BJ (cell line): ENCODE measurements at regions of chr5 and their contacts with region 1.

Region 1: DNA sequence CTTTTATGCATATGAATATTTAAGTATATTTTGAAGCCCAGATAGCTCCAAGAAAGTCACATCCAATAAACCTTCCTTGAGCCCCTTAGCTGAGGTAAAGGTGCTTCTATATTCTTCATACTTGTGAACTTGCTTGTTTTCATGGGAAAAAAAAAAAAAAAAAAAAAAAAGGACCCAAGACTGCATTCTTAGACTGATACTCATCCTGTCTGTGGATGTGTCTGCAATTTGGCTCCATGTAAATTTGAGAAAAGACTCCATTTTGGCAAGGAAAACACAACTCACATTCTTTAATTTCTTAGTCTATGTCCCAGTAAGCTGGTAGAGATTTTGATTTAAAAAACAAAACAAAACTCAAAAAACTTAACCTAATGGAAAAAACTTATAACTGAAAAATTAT is 238.3 kb downstream of the FBXL17 start:
- DNase-seq: peak; percentile 40
- H3K4me3 ChIP-seq: no peak overlapping the region
- H3K27me3 ChIP-seq: no peaks in the 10 kb centered on the region
- CTCF ChIP-seq: no peak

Region 2: DNA sequence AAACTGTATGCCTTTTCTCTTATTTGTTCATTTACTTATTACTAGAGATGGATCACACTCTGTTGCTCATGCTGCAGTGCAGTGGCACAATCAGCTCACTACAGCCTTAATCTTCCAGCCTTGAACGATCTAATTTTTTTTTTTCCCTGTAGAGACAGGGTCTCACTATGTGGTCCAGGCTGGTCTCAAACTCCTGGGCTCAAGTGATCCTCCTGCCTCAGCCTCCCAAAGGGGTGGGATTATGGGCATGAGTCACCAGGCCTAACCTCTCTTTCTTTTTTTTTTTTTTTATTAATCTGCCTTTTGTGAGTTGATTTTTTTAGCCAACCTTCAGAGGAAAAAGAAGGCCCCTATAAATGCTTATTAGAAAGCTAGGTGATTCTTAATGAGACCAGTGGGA is 64.7 kb before region 1 on chr5:
- CTCF ChIA-PET with region 1: no interaction called
- POLR2A ChIA-PET with region 1: interaction called, 16 read pairs
- DNase-seq: no peak
- H3K4me3 ChIP-seq: no peak overlapping the region
- H3K27me3 ChIP-seq: no peaks in the 10 kb centered on the region
- CTCF ChIP-seq: no peak